Activated naive CD4-positive, alpha-beta T cell treated with anti-CD3 and anti-CD28 coated beads for 36 hours (primary cell): ENCODE measurements at regions of chrX and their contacts with region 1.

Region 1: DNA sequence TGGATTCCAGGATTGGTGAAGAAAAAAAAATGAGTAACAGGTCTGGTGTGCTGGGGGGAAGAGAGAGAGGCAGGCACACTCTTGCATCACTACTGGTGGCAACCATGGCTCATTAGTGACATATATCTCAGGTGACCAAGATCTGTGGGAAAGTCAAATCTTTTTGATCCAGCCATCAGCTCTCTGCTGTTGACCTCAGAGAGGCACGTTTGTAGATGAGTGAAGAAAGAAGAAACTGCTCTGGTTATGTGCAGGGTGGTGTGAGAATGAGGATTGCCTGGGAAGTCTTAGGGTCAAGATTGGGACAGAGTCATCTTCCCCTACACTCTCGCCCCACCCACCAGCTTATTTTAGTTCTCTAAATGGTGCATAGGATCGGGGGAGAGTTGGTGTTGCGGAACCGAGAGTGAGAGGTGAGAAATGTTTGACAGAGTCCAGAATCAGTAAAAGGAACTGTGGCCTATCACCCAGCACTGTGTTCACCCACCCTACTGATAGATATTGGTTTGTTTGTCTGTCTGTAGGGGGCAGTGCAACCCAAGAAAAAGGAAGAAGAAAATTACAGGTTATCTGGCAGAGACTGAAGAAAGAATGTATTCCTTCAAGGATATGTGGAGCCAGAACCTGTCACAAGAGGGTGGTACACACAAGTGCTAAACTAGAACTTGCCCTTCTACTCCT is 21.9 kb downstream of the ARMCX6 start:
- DNase-seq: peak; percentile 18
- H3K4me3 Mint-ChIP-seq: no peak overlapping the region
- H3K27ac Mint-ChIP-seq: no peak overlapping the region
- H3K4me1 Mint-ChIP-seq: no peaks in the 10 kb centered on the region
- H3K27me3 Mint-ChIP-seq: peaks cover 10% of the 10 kb centered on the region

Region 2: GRCh38 chrX:101759000-101759399 is 163.1 kb after region 1 on chrX:
- CTCF ChIA-PET with region 1: interaction called, 9 read pairs
- intact Hi-C with region 1: loop called (anchors 5 kb)
- DNase-seq: peak; percentile 31
- H3K4me3 Mint-ChIP-seq: no peak overlapping the region
- H3K27ac Mint-ChIP-seq: no peak overlapping the region
- H3K4me1 Mint-ChIP-seq: peaks cover 2% of the 10 kb centered on the region
- H3K27me3 Mint-ChIP-seq: no peaks in the 10 kb centered on the region

Region 3: DNA sequence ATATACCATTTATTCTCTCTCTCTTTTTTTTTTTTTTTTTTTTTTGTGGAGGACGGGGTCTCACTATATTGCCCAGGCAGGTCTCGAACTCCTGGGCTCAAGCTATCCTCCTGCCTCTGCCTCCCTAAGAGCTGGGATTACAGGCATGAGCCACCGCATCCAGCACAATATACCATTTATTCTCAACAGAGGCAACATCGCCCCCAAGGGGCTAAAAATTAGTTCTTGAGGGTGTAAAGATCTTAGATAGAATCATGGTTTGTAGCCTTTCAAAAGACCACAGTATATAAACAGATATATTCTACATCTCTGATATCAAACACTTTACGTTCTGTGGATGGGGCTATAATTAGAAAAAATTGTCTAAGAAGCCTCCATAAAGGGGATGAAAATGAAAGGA is 489.8 kb after region 1 on chrX:
- CTCF ChIA-PET with region 1: no interaction called
- intact Hi-C with region 1: loop called (anchors 5 kb)
- DNase-seq: peak; percentile 16
- H3K4me3 Mint-ChIP-seq: no peak overlapping the region
- H3K27ac Mint-ChIP-seq: no peak overlapping the region
- H3K4me1 Mint-ChIP-seq: no peaks in the 10 kb centered on the region
- H3K27me3 Mint-ChIP-seq: peaks cover 5% of the 10 kb centered on the region